ENCODE measurements at regions of chr5 and their contacts with region 1.

Region 1: DNA sequence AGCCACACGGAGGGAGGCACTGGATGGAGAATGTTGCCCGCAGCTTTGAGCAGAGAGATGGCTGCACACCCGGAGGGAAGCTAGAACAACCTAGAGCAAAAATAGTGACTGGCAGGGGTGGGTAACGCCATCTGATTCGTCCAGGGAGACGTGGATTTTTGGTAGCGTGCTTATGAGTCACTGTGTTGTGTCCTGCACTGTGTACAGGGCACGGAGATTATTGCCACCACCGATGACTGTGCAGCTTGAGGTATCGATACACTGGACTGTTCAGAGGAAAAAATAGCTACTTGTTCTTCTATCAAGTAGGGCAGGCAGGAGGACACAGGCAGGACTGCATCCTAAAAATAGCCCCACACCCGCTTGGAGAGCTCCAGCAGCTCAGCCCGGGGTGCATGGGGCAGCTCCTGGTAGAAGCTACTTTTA is 6.0 kb downstream of the UBE2QL1 start:
- DNase-seq: peak; percentile 88 to 93
- ATAC-seq: peak; percentile 69 to 78
- H3K4me3 ChIP-seq: peak overlapping the region; percentile 4 to 28 (median 22)
- H3K27ac ChIP-seq: peak overlapping the region; percentile 91 to 97 (median 96)
- H3K4me1 ChIP-seq: peaks cover 54 to 57% of the 10 kb centered on the region in 2 donors
- H3K27me3 ChIP-seq: no peaks in the 10 kb centered on the region
- CTCF ChIP-seq: no peak
- POLR2A ChIP-seq: peak; percentile 57 to 81

Region 2: DNA sequence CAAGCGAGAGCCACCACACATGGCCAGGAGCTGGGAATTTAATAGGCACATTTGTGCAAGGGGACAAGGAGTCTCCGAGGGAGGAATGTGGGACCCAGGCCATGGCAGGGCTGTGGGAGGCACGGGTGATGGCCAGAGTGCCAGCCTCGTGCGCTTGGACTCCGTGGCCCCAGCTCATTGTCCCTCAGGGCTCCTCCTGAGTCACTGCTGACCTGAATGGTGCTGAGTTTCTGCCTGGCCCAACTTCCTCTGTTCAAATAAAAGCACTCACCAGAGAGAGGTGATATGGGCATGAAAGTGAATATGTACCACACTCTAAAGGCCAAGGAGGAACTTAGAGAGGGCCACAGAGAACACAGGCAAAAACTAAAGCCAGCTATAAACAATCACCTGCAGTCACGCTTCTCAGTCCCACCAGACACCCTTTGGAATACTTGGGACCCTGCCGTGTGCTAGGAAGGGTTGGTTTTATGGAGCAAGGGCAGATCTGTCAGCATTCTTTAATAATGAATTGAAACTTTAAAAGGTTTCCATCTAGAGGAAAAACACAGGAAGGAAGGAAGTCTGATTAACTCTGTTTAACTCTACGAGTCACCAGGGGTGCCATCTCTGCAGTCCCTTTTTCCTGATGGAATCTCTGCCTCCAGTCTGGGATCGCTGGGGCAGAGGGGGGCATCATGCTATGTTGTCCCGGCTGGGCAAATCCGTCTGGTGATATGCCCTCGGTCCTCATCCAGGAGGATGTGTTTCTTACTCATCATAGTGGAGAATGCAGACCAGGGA is 31.1 kb before region 1 on chr5:
- in situ Hi-C with region 1: no loop called
- intact Hi-C with region 1: loop called (anchors 2 kb)
- DNase-seq: peak; percentile 81 to 90
- ATAC-seq: peak; percentile 89 to 93
- H3K4me3 ChIP-seq: no peak overlapping the region
- H3K27ac ChIP-seq: peak overlapping the region; percentile 74 to 88 (median 85)
- H3K4me1 ChIP-seq: peaks cover 11 to 22% of the 10 kb centered on the region in 2 donors
- H3K27me3 ChIP-seq: no peaks in the 10 kb centered on the region
- CTCF ChIP-seq: no peak
- POLR2A ChIP-seq: peak in 1 of 2 donors; percentile 34

Region 3: GRCh38 chr5:6492934-6493333 is 38.3 kb after region 1 on chr5:
- in situ Hi-C with region 1: no loop called
- intact Hi-C with region 1: loop called (anchors 5 kb)
- DNase-seq: no peak
- ATAC-seq: peak in 1 of 2 donors; percentile 63
- H3K4me3 ChIP-seq: no peak overlapping the region
- H3K27ac ChIP-seq: peak overlapping the region in 3 of 4 donors; percentile 18 to 38 (median 27)
- H3K4me1 ChIP-seq: peaks cover 11 to 33% of the 10 kb centered on the region in 2 donors
- H3K27me3 ChIP-seq: no peaks in the 10 kb centered on the region
- CTCF ChIP-seq: no peak
- POLR2A ChIP-seq: no peak

Region 4: DNA sequence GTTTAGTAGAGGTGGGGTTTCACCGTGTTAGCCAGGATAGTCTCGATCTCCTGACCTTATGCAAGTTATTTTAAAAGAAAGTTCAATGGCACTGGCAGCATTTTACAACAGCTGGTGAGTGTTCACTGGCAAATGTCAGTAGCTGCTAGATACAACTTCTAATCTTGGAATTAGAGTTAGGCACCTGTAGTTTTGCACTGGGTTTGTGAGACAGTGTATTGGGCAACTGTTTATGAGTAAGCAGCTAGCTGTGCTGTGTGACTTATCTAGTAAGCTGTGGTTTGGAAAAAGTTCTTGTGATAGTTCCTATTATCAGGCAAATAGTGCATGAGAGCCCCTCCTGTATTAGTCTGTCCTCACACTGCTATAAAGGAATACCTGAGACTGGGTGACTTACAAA is 55.5 kb after region 1 on chr5:
- in situ Hi-C with region 1: no loop called
- intact Hi-C with region 1: loop called (anchors 2 kb)
- DNase-seq: peak in 1 of 2 donors; percentile 23
- ATAC-seq: peak; percentile 98 to 100
- H3K4me3 ChIP-seq: no peak overlapping the region
- H3K27ac ChIP-seq: peak overlapping the region; percentile 36 to 81 (median 68)
- H3K4me1 ChIP-seq: peaks cover 6 to 11% of the 10 kb centered on the region in 2 donors
- H3K27me3 ChIP-seq: no peaks in the 10 kb centered on the region
- CTCF ChIP-seq: no peak
- POLR2A ChIP-seq: no peak

Region 5: GRCh38 chr5:6551287-6551954 is 96.8 kb after region 1 on chr5:
- in situ Hi-C with region 1: loop called in 2 of 4 experiments (anchors 10 kb)
- intact Hi-C with region 1: loop called (anchors 1 kb)
- DNase-seq: peak; percentile 93 to 97
- ATAC-seq: peak; percentile 93
- H3K4me3 ChIP-seq: peak overlapping the region in 3 of 4 donors; percentile 10 to 41 (median 25)
- H3K27ac ChIP-seq: peak overlapping the region; percentile 82 to 88 (median 84)
- H3K4me1 ChIP-seq: peaks cover 15 to 16% of the 10 kb centered on the region in 2 donors
- H3K27me3 ChIP-seq: no peaks in the 10 kb centered on the region
- CTCF ChIP-seq: no peak
- POLR2A ChIP-seq: peak in 1 of 2 donors; percentile 50

Measured in gastrocnemius medialis (tissue), 4 donors.